ENCODE measurements at regions of chr12 and their contacts with region 1.

Region 1: GRCh38 chr12:132638541-132639418 is 20.2 kb downstream of the P2RX2 start:
- DNase-seq: peak; percentile 69
- H3K4me3 ChIP-seq: no peak overlapping the region; a peak in 1 of 4 replicates
- H3K27ac ChIP-seq: no peak overlapping the region
- H3K4me1 ChIP-seq: no peaks in the 10 kb centered on the region
- H3K27me3 ChIP-seq: no peaks in the 10 kb centered on the region
- CTCF ChIP-seq: peak; percentile 80
- EP300 ChIP-seq: no peak
- RAD21 ChIP-seq: peak; percentile 56

Region 2: DNA sequence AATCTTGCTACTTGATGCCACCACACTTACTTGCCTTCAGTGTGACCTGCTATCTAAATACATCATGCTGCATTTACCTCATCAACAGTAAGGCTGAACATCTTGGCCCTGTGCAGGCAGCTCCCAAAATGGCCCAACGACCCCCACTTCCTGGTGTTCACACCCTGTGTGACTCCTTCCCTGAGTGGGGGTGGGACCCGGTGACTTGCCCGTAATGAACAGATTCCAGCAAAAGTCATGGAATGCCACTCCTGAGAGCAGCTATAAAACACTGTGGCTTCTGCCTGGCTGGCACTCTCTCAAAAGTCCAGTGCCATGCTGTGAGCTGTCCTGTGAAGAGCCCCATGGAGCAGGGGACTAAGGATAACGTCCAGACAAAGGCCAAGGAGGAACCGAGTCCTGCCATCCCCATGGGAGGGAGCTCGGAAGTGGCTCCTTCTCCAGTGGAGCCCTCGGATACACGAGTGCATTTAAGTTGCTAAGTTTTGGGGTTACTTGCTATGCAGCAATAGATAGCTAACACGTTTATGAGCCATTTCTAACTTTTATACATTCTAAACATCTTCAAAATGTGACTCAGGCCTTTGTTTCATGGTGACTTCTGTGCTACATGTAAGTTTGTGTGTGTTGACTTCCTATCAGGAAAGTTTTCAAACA is 12.8 kb after region 1 on chr12:
- CTCF ChIA-PET with region 1: interaction called, 14 read pairs
- POLR2A ChIA-PET with region 1: no interaction called
- DNase-seq: no peak
- H3K4me3 ChIP-seq: no peak overlapping the region
- H3K27ac ChIP-seq: no peak overlapping the region
- H3K4me1 ChIP-seq: no peaks in the 10 kb centered on the region
- H3K27me3 ChIP-seq: no peaks in the 10 kb centered on the region
- CTCF ChIP-seq: no peak
- EP300 ChIP-seq: no peak
- RAD21 ChIP-seq: no peak

Region 3: GRCh38 chr12:132657004-132657683 is 18.4 kb after region 1 on chr12:
- CTCF ChIA-PET with region 1: interaction called, 14 read pairs
- POLR2A ChIA-PET with region 1: no interaction called
- DNase-seq: no peak
- H3K4me3 ChIP-seq: no peak overlapping the region
- H3K27ac ChIP-seq: no peak overlapping the region
- H3K4me1 ChIP-seq: no peaks in the 10 kb centered on the region
- H3K27me3 ChIP-seq: no peaks in the 10 kb centered on the region
- CTCF ChIP-seq: no peak
- EP300 ChIP-seq: no peak
- RAD21 ChIP-seq: no peak

Measured in SK-N-SH (cell line).